PC-9 (cell line): ENCODE measurements at regions of chr4 and their contacts with region 1.

Region 1: GRCh38 chr4:112055100-112055499 is 90.2 kb upstream of the FAM241A start:
- DNase-seq: no peak
- H3K4me3 ChIP-seq: no peak overlapping the region
- H3K27ac ChIP-seq: no peak overlapping the region
- H3K4me1 ChIP-seq: no peaks in the 10 kb centered on the region
- H3K27me3 ChIP-seq: no peaks in the 10 kb centered on the region
- CTCF ChIP-seq: no peak

Region 2: DNA sequence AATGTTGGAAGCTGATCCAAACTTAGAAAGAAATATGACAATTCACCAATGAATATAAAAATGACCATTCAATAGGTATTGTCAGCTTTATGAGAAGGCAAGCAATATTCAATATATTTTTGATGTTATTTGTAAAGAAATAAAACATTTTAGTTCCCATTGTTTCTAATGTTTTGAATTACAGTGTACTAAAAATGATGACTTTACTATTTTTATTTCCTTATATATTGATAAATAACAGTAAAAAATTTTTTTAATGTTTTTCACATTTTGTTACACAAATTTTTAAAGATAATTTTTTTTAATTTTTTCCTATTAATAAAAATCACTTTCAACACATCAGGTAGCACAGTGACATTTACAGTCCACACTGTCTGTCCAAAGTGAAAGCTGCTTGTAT is 475.3 kb before region 1 on chr4:
- CTCF ChIA-PET with region 1: no interaction called
- POLR2A ChIA-PET with region 1: no interaction called
- intact Hi-C with region 1: no loop called
- DNase-seq: no peak
- H3K4me3 ChIP-seq: no peak overlapping the region
- H3K27ac ChIP-seq: no peak overlapping the region
- H3K4me1 ChIP-seq: no peaks in the 10 kb centered on the region
- H3K27me3 ChIP-seq: no peaks in the 10 kb centered on the region
- CTCF ChIP-seq: no peak

Region 3: DNA sequence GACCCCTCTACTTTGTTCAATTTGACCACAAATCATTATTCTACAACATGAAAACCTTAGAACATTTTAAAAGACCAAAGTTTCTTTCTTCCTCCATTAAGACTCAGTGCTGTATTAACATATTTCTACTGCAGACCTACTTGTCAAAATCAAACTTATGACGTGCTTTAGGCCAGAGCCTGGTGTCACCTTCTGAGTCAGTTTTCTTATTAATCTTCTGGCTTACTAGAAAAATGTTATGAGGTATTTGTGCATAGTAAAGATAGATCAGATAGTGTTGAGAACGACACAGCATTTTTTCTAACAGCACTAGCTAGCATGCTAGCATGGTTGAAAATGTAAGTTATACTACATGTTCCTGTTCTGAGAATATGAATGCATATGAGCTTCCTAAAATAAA is 243.4 kb before region 1 on chr4:
- CTCF ChIA-PET with region 1: no interaction called
- POLR2A ChIA-PET with region 1: interaction called, 22 read pairs
- intact Hi-C with region 1: no loop called
- DNase-seq: no peak
- H3K4me3 ChIP-seq: no peak overlapping the region
- H3K27ac ChIP-seq: no peak overlapping the region
- H3K4me1 ChIP-seq: no peaks in the 10 kb centered on the region
- H3K27me3 ChIP-seq: no peaks in the 10 kb centered on the region
- CTCF ChIP-seq: no peak

Region 4: DNA sequence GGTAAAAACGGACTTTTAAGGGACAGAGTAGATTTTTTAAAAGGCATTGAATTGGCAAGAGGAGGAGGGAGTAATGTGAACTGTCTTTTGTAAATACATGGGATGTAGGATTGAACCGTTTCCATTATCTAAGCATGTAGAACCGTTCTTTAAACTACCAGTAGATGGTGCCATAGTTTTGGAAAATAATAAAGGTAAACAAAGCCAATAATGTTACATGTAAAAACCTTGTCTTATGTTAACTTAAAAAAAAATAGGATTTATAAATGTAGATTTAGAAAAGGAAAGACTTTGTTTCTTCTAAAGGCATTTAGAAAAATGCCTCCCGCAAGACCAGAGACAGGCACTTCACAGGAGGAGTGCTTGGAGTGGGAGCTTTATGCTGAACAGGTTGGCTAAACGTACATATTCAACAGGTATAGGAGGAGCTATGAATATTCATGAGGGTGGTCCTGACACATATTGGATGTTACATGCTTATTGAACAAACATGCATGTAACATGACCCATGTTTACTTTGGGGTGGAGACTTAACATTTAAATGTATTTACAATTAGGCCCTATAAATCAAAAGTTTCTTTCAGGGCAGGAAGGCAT is 44.7 kb after region 1 on chr4:
- CTCF ChIA-PET with region 1: no interaction called
- POLR2A ChIA-PET with region 1: no interaction called
- intact Hi-C with region 1: no loop called
- DNase-seq: peak in 1 of 2 experiments; percentile 63
- H3K4me3 ChIP-seq: no peak overlapping the region
- H3K27ac ChIP-seq: no peak overlapping the region
- H3K4me1 ChIP-seq: peaks cover 5% of the 10 kb centered on the region; the same call in 1 of the 2 replicates
- H3K27me3 ChIP-seq: no peaks in the 10 kb centered on the region
- CTCF ChIP-seq: peak; percentile 87

Region 5: DNA sequence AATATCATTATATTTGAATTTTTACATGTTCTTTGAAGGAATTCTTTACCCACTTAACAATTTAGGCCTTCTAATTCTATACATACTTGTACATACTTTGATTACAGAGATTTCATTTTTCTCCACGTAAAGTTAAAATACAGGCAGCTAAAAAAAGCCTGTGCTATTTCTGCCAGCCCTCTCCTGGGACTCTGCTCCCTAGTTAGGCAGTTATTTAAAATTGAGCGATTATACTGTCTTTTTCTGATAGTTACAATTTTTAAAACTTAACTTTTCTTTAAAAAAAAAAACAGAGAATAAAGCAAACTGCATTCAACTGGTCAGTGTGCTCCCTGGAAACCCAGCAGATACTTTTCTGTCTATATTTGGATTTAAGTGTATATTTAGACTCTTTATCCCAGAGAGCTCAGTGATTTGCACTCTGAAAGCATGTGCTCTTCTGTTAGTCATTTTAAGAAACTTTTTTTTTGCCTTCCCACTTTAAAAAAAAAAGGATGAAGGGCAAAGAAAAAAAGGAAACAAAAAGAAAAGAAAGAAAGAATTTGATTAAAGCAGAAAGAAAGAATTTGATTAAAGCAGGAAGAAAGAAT is 72.0 kb after region 1 on chr4:
- CTCF ChIA-PET with region 1: interaction called, 3 read pairs
- POLR2A ChIA-PET with region 1: interaction called, 10 read pairs
- intact Hi-C with region 1: no loop called
- DNase-seq: no peak
- H3K4me3 ChIP-seq: no peak overlapping the region
- H3K27ac ChIP-seq: no peak overlapping the region; the same call in 1 of the 2 replicates
- H3K4me1 ChIP-seq: peaks cover 22% of the 10 kb centered on the region
- H3K27me3 ChIP-seq: no peaks in the 10 kb centered on the region
- CTCF ChIP-seq: no peak

Region 6: GRCh38 chr4:112626228-112626627 is 571.1 kb after region 1 on chr4:
- CTCF ChIA-PET with region 1: interaction called, 10 read pairs
- POLR2A ChIA-PET with region 1: no interaction called
- intact Hi-C with region 1: no loop called
- DNase-seq: no peak
- H3K4me3 ChIP-seq: no peak overlapping the region
- H3K27ac ChIP-seq: no peak overlapping the region
- H3K4me1 ChIP-seq: no peaks in the 10 kb centered on the region
- H3K27me3 ChIP-seq: no peaks in the 10 kb centered on the region
- CTCF ChIP-seq: no peak